CD4-positive, alpha-beta memory T cell (primary cell): ENCODE measurements at regions of chr13 and their contacts with region 1.

Region 1: DNA sequence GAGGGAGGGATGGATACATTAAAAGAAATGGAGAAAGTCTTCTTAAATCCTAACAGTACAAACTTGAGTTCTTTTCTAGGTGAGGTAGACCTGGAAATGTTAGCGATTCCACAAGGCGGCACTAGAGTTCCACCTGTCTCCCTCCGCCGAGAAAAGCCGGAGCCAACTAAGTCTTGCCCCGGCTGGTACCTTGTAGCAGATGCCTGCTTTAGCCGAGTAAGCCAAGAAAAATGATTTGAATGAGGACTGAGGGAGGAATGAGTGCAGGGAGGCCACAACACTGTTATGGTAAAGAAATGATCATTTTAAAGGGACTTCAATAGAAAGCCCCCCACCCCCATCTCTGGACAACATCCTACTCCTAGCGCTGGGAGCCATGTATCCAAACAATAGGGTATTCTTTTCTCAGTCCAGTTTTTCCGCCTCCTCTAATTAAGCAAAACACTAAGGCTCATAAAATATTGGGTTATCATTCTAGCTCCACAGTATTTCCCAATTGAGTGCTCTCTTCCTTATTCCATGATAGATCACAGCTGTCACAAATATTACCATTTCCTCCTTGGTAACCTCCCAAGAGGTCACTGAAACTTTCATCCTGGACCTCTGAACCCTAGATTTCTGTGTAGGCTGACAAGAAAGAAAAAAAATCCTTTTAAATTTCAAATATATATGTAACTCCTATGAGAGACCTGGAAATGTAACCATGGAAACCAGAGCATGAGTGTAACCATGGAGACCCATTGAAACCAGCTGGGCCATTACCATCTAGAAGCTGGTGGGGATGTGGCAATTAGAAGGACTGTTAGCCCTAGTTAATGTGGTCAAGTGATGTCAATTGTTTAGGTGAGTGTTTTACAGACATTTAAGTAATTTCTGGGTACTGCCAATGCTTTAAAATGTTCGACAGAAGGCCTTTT is 58.3 kb downstream of the GPALPP1 start:
- DNase-seq: peak; percentile 68 to 74 (median 72)
- H3K4me3 ChIP-seq: peak overlapping the region in 1 of 2 donors; percentile 31
- H3K4me3 Mint-ChIP-seq: peak overlapping the region; percentile 63 to 87 (median 80)
- H3K27ac ChIP-seq: no peak overlapping the region
- H3K27ac Mint-ChIP-seq: peak overlapping the region in 4 of 7 donors; percentile 20 to 86 (median 47)
- H3K4me1 ChIP-seq: peaks cover 16% of the 10 kb centered on the region
- H3K4me1 Mint-ChIP-seq: peaks cover 9 to 14% (median 10%) of the 10 kb centered on the region in 4 donors
- H3K27me3 ChIP-seq: no peaks in the 10 kb centered on the region
- H3K27me3 Mint-ChIP-seq: peaks cover 5 to 16% of the 10 kb centered on the region in 2 donors

Region 2: GRCh38 chr13:45119991-45120864 is 72.6 kb after region 1 on chr13 and contains the start of gene GTF2F2:
- CTCF ChIA-PET with region 1: interaction called, 5 read pairs
- POLR2A ChIA-PET with region 1: no interaction called
- intact Hi-C with region 1: loop called (anchors 5 kb)
- DNase-seq: peak; percentile 86 to 89 (median 87)
- H3K4me3 ChIP-seq: peak within 1 kb of the TSS; percentile 83 to 88
- H3K4me3 Mint-ChIP-seq: no peak within 1 kb of the TSS
- H3K27ac ChIP-seq: peak within 1 kb of the TSS; percentile 90
- H3K27ac Mint-ChIP-seq: no peak within 1 kb of the TSS
- H3K4me1 ChIP-seq: peaks cover 28% of the 10 kb centered on the region
- H3K4me1 Mint-ChIP-seq: peaks cover 6 to 21% (median 11%) of the 10 kb centered on the region in 4 donors
- H3K27me3 ChIP-seq: no peaks in the 10 kb centered on the region
- H3K27me3 Mint-ChIP-seq: no peaks in the 10 kb centered on the region
- total RNA-seq, gene GTF2F2: 12.3 to 14.7 TPM

Region 3: GRCh38 chr13:45297456-45298205 is 250.0 kb after region 1 on chr13:
- CTCF ChIA-PET with region 1: interaction called, 146 read pairs
- POLR2A ChIA-PET with region 1: interaction called, 4 read pairs
- intact Hi-C with region 1: no loop called
- DNase-seq: peak in 4 of 5 donors; percentile 45 to 56 (median 50)
- H3K4me3 ChIP-seq: no peak overlapping the region
- H3K4me3 Mint-ChIP-seq: peak overlapping the region in 6 of 8 donors; percentile 32 to 71 (median 38)
- H3K27ac ChIP-seq: peak overlapping the region; percentile 10
- H3K27ac Mint-ChIP-seq: peak overlapping the region; percentile 47 to 90 (median 81)
- H3K4me1 ChIP-seq: peaks cover 40% of the 10 kb centered on the region
- H3K4me1 Mint-ChIP-seq: peaks cover 31 to 50% (median 39%) of the 10 kb centered on the region in 4 donors
- H3K27me3 ChIP-seq: no peaks in the 10 kb centered on the region
- H3K27me3 Mint-ChIP-seq: peaks cover 1 to 3% of the 10 kb centered on the region in 2 donors

Region 4: DNA sequence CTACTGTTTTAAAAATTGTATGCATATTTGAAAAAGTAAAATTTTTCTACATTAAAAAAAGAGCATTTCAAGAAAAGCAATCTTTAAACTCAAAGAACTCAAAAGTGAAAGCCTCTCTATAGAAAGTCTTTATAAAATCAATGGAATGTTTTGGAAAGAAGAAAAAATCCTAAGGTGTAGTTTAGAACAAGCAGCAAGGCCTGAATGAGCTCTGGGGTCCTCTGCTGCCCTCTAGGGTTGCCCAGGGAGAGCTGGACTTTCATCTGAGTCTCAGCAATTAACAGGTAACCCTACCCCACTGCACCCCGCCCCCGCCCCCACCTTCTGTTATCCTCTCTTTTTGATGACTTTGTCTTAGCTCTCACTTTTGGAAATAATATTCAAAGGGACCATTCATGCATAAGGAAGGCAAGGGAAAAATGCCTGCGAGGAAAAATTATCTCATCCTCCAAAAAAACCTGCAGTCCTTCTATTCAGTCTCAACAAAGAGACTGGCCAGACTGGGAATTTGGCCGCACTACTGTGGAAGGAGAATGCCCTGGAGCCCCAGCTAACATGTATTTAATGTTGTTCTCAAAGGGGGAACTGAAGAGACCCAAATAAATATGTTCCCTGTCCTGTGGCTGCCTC is 346.4 kb after region 1 on chr13:
- CTCF ChIA-PET with region 1: interaction called, 8 read pairs
- POLR2A ChIA-PET with region 1: no interaction called
- intact Hi-C with region 1: loop called (anchors 2 kb)
- DNase-seq: peak in 3 of 5 donors; percentile 22 to 31 (median 26)
- H3K4me3 ChIP-seq: no peak overlapping the region
- H3K4me3 Mint-ChIP-seq: no peak overlapping the region
- H3K27ac ChIP-seq: no peak overlapping the region
- H3K27ac Mint-ChIP-seq: peak overlapping the region; percentile 53 to 94 (median 77)
- H3K4me1 ChIP-seq: peaks cover 50% of the 10 kb centered on the region
- H3K4me1 Mint-ChIP-seq: peaks cover 35 to 49% (median 45%) of the 10 kb centered on the region in 4 donors
- H3K27me3 ChIP-seq: no peaks in the 10 kb centered on the region
- H3K27me3 Mint-ChIP-seq: no peaks in the 10 kb centered on the region

Region 5: DNA sequence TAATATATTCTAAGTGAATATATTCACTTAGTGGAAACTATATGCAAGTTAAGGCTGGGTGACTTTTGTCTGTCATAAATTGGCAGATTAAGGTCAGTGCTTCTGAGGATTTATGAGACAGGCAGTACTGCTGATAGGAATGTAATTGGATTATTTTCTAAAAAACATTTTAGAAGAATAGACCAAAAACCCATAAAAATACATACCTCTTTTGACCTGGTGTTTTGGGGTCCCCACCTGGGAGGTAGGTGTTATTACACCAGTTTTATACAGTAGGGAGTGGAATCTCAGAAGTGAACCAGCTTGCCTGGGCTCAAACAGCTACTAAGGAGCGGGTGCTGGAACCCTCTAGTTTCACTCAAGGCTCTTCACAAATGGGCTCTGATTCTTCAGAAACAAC is 442.4 kb after region 1 on chr13:
- CTCF ChIA-PET with region 1: interaction called, 7 read pairs
- POLR2A ChIA-PET with region 1: no interaction called
- intact Hi-C with region 1: loop called (anchors 1 kb)
- DNase-seq: peak in 4 of 5 donors; percentile 30 to 37 (median 32)
- H3K4me3 ChIP-seq: no peak overlapping the region
- H3K4me3 Mint-ChIP-seq: no peak overlapping the region
- H3K27ac ChIP-seq: no peak overlapping the region
- H3K27ac Mint-ChIP-seq: peak overlapping the region in 2 of 7 donors; percentile 47 to 61
- H3K4me1 ChIP-seq: no peaks in the 10 kb centered on the region
- H3K4me1 Mint-ChIP-seq: peaks cover 0 to 4% (median 2%) of the 10 kb centered on the region in 4 donors
- H3K27me3 ChIP-seq: no peaks in the 10 kb centered on the region
- H3K27me3 Mint-ChIP-seq: no peaks in the 10 kb centered on the region

Region 6: GRCh38 chr13:46126552-46127357 is 1079.1 kb after region 1 on chr13:
- CTCF ChIA-PET with region 1: no interaction called
- POLR2A ChIA-PET with region 1: no interaction called
- intact Hi-C with region 1: loop called (anchors 10 kb)
- DNase-seq: peak; percentile 58 to 72 (median 65)
- H3K4me3 ChIP-seq: no peak overlapping the region
- H3K4me3 Mint-ChIP-seq: peak overlapping the region in 1 of 8 donors; percentile 28
- H3K27ac ChIP-seq: no peak overlapping the region
- H3K27ac Mint-ChIP-seq: peak overlapping the region; percentile 62 to 94 (median 83)
- H3K4me1 ChIP-seq: peaks cover 44% of the 10 kb centered on the region
- H3K4me1 Mint-ChIP-seq: peaks cover 32 to 53% (median 44%) of the 10 kb centered on the region in 4 donors
- H3K27me3 ChIP-seq: no peaks in the 10 kb centered on the region
- H3K27me3 Mint-ChIP-seq: no peaks in the 10 kb centered on the region